ENCODE measurements at regions of chr13 and their contacts with region 1.

Region 1: DNA sequence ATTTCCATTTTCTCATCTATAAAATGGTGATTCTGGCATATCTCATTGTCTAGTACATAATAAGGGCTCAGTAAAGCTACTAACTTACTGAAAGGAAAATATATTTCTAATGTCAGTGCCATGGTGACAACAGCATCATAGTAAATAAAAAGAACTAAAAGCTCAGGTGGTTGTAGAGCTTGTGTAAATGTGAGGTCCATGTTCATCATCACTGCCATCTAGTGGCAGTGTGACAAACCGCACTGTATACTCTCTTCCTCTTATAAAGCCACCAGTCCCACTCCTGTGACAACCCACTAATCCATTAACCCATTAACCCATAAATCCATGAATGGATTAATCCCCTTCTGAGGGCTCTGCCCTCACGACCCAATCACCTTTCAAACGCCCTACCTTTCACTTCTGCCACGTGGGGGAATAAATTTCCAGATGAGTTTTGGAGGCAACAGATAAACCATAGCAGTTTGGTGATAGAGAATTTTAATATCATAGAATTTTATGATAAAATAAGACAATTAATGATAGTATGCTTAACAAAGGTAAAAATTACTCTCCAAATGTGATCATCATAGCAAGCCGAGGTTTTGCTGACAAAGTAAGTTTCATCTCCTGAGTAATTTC is 160.4 kb upstream of the SGCG start:
- DNase-seq: peak; percentile 60 to 62
- H3K4me3 ChIP-seq: no peak overlapping the region
- H3K27ac ChIP-seq: no peak overlapping the region
- H3K4me1 ChIP-seq: no peaks in the 10 kb centered on the region
- H3K27me3 ChIP-seq: no peaks in the 10 kb centered on the region
- CTCF ChIP-seq: peak in 5 of 6 experiments; percentile 74 to 88 (median 79)
- POLR2A ChIP-seq: no peak

Region 2: GRCh38 chr13:22569811-22570210 is 450.5 kb before region 1 on chr13:
- intact Hi-C with region 1: no loop called
- DNase-seq: no peak
- H3K4me3 ChIP-seq: no peak overlapping the region
- H3K27ac ChIP-seq: no peak overlapping the region
- H3K4me1 ChIP-seq: no peaks in the 10 kb centered on the region
- H3K27me3 ChIP-seq: no peaks in the 10 kb centered on the region
- CTCF ChIP-seq: no peak
- POLR2A ChIP-seq: no peak

Region 3: DNA sequence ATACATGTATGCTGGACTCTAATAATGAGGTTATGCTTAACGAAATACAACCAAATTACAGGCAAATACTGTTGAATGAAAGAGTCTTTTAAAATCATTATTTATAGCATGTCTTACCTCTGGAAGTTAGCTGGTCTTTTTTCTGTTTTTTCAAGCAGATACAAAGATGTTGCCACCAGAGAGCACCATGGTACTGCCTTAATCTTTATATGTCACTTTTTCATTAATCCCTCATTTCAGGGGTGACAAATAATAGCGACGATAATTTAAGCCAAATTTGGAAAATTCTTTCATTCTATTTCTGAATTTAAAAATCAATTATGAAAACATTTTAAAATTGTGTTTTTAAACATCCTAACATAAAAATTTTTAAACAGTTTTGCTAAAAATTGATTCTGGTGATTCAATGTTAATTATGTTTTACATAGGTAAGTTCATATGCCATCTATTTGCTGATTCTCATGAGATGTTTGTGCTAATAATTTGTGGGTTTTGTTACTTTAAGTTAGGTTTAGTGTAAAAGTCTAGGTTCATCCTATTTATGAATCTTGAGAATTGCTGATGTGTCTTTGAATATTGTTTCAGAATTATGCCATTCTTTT is 218.8 kb before region 1 on chr13:
- intact Hi-C with region 1: loop called (anchors 5 kb)
- DNase-seq: no peak
- H3K4me3 ChIP-seq: no peak overlapping the region
- H3K27ac ChIP-seq: no peak overlapping the region
- H3K4me1 ChIP-seq: no peaks in the 10 kb centered on the region
- H3K27me3 ChIP-seq: no peaks in the 10 kb centered on the region
- CTCF ChIP-seq: peak in 4 of 6 experiments; percentile 27 to 71 (median 55)
- POLR2A ChIP-seq: no peak